Calu3 (cell line): ENCODE measurements at regions of chr7 and their contacts with region 1.

Region 1: DNA sequence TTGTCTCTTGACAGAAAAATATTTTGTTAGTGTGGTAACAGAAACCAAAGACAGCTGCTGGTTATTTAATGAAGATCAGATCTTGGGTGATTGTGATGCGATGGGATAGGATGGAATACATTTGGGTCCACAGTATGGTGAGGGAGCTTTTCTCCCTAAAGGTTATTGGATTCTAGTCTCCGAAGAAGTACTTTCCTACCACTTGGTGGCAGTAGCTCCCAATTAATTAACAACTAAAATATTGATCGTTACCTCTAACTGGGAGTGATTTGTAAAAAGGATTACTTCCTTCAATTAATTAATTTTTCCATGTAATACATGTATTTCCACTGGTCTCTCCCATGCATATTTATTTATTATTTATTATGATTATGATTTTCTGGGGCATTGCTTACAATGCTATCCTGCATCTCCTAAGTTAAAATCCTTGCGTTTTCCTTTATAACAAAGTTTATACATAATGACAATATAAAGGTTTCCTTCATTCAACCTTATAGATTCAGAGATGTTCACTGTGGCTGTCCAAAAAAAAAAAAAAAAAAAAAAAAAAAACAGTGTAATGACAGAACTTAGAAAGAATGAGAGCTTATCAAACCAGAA is 25.6 kb downstream of the TMEM196 start:
- DNase-seq: peak; percentile 39
- H3K4me3 Mint-ChIP-seq: no peak overlapping the region
- H3K27ac Mint-ChIP-seq: no peak overlapping the region
- H3K4me1 Mint-ChIP-seq: peaks cover 26% of the 10 kb centered on the region
- H3K27me3 Mint-ChIP-seq: no peaks in the 10 kb centered on the region
- CTCF ChIP-seq: peak; percentile 86

Region 2: GRCh38 chr7:18626717-18627116 is 1121.1 kb before region 1 on chr7:
- CTCF ChIA-PET with region 1: no interaction called
- intact Hi-C with region 1: no loop called
- DNase-seq: no peak
- H3K4me3 Mint-ChIP-seq: no peak overlapping the region
- H3K27ac Mint-ChIP-seq: no peak overlapping the region
- H3K4me1 Mint-ChIP-seq: no peaks in the 10 kb centered on the region
- H3K27me3 Mint-ChIP-seq: no peaks in the 10 kb centered on the region
- CTCF ChIP-seq: no peak

Region 3: GRCh38 chr7:19871102-19871501 is 123.3 kb after region 1 on chr7:
- CTCF ChIA-PET with region 1: no interaction called
- intact Hi-C with region 1: no loop called
- DNase-seq: no peak
- H3K4me3 Mint-ChIP-seq: no peak overlapping the region
- H3K27ac Mint-ChIP-seq: no peak overlapping the region
- H3K4me1 Mint-ChIP-seq: no peaks in the 10 kb centered on the region
- H3K27me3 Mint-ChIP-seq: no peaks in the 10 kb centered on the region
- CTCF ChIP-seq: no peak

Region 4: DNA sequence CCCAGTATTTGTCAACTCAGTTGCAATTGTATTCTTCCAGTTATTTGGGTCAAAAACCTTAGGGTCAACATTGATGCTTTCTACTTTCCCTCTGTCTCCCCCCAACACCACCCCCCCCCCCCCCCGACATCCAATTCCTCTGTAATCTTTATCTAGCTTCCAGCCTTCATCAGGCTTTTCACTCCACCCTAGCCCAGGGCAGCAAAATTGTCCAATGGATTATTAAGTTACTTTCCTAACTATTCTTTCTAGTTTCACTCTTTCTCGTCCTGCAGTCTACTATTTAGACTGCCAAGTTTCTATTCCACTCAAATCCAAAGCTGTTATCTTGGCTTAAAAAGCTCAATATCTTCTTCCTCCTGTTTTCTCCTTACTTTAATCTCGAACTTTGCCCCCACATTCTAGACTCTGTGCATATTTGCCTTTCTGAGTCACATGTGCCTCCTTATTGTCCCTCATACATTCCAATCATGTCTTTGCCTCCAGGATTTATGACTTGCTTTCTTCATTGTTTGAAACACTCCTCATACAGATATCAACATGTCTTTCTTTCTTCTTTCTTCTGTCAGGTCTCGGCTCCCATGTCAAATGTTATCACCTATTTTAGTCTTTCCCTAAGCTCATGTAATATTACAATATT is 222.1 kb after region 1 on chr7:
- CTCF ChIA-PET with region 1: no interaction called
- intact Hi-C with region 1: loop called (anchors 5 kb)
- DNase-seq: peak; percentile 35
- H3K4me3 Mint-ChIP-seq: peak overlapping the region; percentile 50
- H3K27ac Mint-ChIP-seq: peak overlapping the region; percentile 75
- H3K4me1 Mint-ChIP-seq: peaks cover 18% of the 10 kb centered on the region
- H3K27me3 Mint-ChIP-seq: no peaks in the 10 kb centered on the region
- CTCF ChIP-seq: no peak

Region 5: DNA sequence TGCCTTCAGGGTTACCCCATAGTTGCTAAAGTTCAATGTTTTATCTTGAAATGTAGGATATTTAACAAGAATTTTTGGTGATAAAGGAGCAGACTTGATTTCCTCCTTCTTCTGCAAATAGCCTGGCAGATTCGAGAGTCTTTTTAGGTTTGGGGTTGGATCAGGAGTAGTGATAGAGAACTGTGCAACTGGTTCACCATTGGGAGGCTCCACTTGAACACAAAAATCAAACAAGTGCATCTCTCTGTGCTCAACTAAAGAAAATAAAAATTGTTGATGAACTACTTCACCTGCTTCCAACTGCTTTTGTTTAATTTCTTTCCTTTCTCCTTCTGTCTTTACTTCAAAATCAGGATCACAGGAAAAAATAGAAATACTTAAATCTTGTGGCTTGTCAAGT is 410.8 kb after region 1 on chr7:
- CTCF ChIA-PET with region 1: interaction called, 4 read pairs
- intact Hi-C with region 1: loop called (anchors 10 kb)
- DNase-seq: peak; percentile 20
- H3K4me3 Mint-ChIP-seq: no peak overlapping the region
- H3K27ac Mint-ChIP-seq: peak overlapping the region; percentile 48
- H3K4me1 Mint-ChIP-seq: peaks cover 24% of the 10 kb centered on the region
- H3K27me3 Mint-ChIP-seq: no peaks in the 10 kb centered on the region
- CTCF ChIP-seq: no peak

Region 6: GRCh38 chr7:20219446-20220292 is 471.8 kb after region 1 on chr7:
- CTCF ChIA-PET with region 1: no interaction called
- intact Hi-C with region 1: loop called (anchors 2 kb)
- DNase-seq: peak; percentile 98
- H3K4me3 Mint-ChIP-seq: peak overlapping the region; percentile 73
- H3K27ac Mint-ChIP-seq: peak overlapping the region; percentile 95
- H3K4me1 Mint-ChIP-seq: peaks cover 61% of the 10 kb centered on the region
- H3K27me3 Mint-ChIP-seq: no peaks in the 10 kb centered on the region
- CTCF ChIP-seq: no peak

Region 7: DNA sequence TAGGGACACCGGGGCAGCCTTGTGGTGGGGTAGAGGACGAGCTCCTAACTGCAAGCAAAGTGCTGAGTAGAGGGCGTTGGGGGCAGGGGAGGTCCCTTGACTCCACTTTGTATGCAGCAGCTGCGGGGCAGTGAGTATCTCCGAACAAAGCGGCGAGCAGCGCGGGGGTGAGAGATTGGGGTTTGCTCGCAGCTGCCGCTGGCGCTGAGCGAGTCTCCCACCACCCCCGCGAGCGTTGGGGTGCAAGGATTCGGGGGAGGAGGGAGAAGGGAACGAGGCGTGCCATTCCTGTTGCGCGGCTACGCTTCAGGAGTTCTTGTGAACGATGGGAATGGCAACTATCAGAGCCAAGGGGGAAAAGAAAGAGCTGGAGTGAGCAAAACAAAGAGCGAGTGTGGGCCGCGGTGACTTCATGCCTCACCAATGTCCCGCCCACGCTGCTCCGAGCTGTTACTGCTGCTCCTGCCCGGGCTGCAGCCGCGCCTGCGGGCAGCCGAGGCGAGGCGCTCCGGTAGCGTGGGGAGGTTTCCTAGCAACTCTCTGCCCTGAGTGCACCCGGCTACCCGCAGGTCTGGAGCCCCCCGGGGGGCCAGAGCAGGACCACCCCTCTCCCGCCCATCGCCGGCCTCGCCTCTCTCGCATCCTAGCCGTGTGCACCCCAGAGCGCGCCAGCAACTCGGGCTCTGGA is 582.5 kb after region 1 on chr7 and contains the start of gene ITGB8:
- CTCF ChIA-PET with region 1: interaction called, 3 read pairs
- intact Hi-C with region 1: loop called (anchors 5 kb)
- DNase-seq: peak; percentile 93
- H3K4me3 Mint-ChIP-seq: peak within 1 kb of the TSS; percentile 93
- H3K27ac Mint-ChIP-seq: peak within 1 kb of the TSS; percentile 98
- H3K4me1 Mint-ChIP-seq: peaks cover 21% of the 10 kb centered on the region
- H3K27me3 Mint-ChIP-seq: no peaks in the 10 kb centered on the region
- CTCF ChIP-seq: no peak
- total RNA-seq, gene ITGB8: 157 and 183 TPM in 2 replicates